ENCODE measurements at regions of chr6 and their contacts with region 1.

Region 1: GRCh38 chr6:33200219-33201146 is at the starts of genes RXRB and SLC39A7:
- DNase-seq: peak; percentile 99 to 100
- H3K4me3 ChIP-seq: peak within 1 kb of the TSS; percentile 90 to 91
- H3K27ac ChIP-seq: peak within 1 kb of the TSS; percentile 95 to 97
- H3K4me1 ChIP-seq: peaks cover 16 to 32% of the 10 kb centered on the region in 2 donors
- H3K27me3 ChIP-seq: no peaks in the 10 kb centered on the region
- CTCF ChIP-seq: no peak
- total RNA-seq, gene RXRB: 21.6 TPM
- total RNA-seq, gene SLC39A7: 59.7 TPM

Region 2: GRCh38 chr6:32643904-32644303 is 556.6 kb before region 1 on chr6:
- intact Hi-C with region 1: no loop called
- DNase-seq: no peak
- H3K4me3 ChIP-seq: no peak overlapping the region
- H3K27ac ChIP-seq: no peak overlapping the region
- H3K4me1 ChIP-seq: no peaks in the 10 kb centered on the region
- H3K27me3 ChIP-seq: no peaks in the 10 kb centered on the region
- CTCF ChIP-seq: no peak

Region 3: DNA sequence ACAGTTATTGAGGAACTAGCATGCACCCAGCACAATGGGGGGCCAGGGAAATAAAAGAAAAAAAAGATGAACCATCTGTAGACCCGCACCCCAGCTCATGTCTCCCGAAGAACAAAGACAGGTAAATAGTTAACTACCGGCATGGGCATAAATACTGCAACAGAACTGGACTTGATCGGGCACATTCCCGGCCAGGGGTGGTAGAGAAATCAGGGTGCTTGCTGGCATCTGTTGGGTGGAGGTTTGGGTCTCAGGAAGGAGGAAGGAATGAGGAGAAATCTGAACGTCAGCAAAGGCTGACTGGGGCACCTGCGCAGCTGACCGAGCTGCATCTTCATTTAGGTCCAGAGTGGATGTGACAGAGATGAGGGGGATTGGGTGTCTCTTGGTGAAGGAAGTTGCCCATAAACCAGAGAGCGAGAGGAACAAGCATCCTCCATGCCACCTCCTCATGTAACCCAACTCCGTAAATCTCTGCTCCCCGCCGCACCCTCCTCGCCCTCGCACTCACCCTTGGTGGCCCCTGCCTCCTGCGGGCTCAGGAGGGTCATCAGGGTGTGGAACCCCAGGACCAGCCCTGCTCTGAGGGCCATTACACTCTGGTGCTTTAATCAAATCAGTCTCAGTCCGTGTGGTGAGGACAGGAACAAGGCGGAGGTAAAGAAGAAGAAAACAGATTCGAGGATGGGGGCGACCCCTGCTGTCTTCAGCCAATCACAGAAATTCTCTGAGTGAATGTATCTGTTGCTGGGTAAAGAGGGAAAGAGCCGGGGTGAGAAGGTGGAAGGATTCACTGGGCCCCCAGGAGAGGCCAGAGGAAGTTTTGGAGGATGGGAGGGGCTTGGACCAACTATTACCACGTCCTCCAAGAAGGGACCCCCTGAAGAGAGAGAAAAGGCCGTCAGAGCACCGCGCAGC is 191.3 kb before region 1 on chr6 and contains the start of gene HLA-DOA:
- intact Hi-C with region 1: no loop called
- DNase-seq: no peak
- H3K4me3 ChIP-seq: peak within 1 kb of the TSS in 1 of 2 donors; percentile 35
- H3K27ac ChIP-seq: no peak within 1 kb of the TSS
- H3K4me1 ChIP-seq: no peaks in the 10 kb centered on the region
- H3K27me3 ChIP-seq: no peaks in the 10 kb centered on the region
- CTCF ChIP-seq: no peak
- total RNA-seq, gene HLA-DOA: 358 TPM

Region 4: GRCh38 chr6:33161354-33162331 is 38.8 kb before region 1 on chr6:
- intact Hi-C with region 1: loop called (anchors 1 kb)
- DNase-seq: peak; percentile 38 to 90
- H3K4me3 ChIP-seq: peak overlapping the region; percentile 58 to 61
- H3K27ac ChIP-seq: peak overlapping the region; percentile 47 to 58
- H3K4me1 ChIP-seq: peaks cover 4% of the 10 kb centered on the region in 2 donors
- H3K27me3 ChIP-seq: no peaks in the 10 kb centered on the region
- CTCF ChIP-seq: peak; percentile 89 to 97 (median 92)

Region 5: DNA sequence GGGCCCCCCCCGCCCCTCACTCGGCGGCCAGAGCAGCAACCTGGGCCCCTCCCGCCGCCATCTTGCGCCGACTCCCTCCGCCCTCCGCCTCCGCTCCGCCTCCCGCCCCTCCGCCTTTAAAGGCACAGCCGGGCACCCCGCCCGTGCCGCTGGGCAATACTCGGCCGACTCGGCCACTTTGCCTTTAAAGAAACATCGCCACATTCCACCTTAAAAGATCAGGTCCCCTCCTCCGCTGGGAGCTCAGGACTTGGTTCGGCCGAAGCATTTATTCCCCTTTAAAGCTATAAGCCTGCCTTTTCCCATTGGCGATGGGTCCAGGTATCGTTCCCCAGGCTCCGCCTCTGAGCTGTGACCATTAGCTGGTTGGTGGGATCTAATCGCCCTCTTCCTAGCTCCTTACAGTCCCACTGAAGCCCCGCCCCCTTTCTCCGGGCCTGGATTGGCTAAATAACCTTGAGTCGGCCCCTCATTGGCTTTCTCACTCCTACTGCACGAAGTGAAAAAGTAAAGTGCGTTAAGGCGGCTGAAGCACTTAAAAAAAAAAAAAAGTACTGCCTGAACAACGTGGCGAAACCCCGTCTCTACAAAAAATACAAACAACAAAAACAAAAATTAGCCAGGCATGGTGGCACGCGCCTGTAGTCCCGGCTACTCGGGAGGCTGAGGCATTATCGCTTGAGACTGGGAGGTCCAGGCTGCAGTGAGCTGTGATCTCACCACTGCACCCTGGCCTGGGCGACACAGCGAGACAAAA is 117.4 kb after region 1 on chr6 and contains the start of gene ZBTB22:
- intact Hi-C with region 1: loop called (anchors 5 kb)
- DNase-seq: peak; percentile 99 to 100
- H3K4me3 ChIP-seq: peak within 1 kb of the TSS; percentile 59 to 64
- H3K27ac ChIP-seq: peak within 1 kb of the TSS; percentile 75 to 93
- H3K4me1 ChIP-seq: peaks cover 20 to 49% of the 10 kb centered on the region in 2 donors
- H3K27me3 ChIP-seq: no peaks in the 10 kb centered on the region
- CTCF ChIP-seq: no peak
- total RNA-seq, gene ZBTB22: 35.5 TPM

Region 6: GRCh38 chr6:33410050-33410710 is 209.7 kb after region 1 on chr6:
- intact Hi-C with region 1: loop called (anchors 5 kb)
- DNase-seq: peak; percentile 89 to 98
- H3K4me3 ChIP-seq: peak overlapping the region; percentile 84 to 98
- H3K27ac ChIP-seq: peak overlapping the region; percentile 96 to 99
- H3K4me1 ChIP-seq: peaks cover 10% of the 10 kb centered on the region in 2 donors
- H3K27me3 ChIP-seq: no peaks in the 10 kb centered on the region
- CTCF ChIP-seq: no peak

Measured in ascending aorta (tissue), 2 donors.